ENCODE measurements at regions of chr20 and their contacts with region 1.

Region 1: GRCh38 chr20:54680872-54681619 is 205.7 kb downstream of the DOK5 start:
- DNase-seq: no peak
- ATAC-seq: peak; percentile 27; the same call in 1 of the 3 replicates
- H3K4me3 ChIP-seq: no peak overlapping the region
- H3K27ac ChIP-seq: no peak overlapping the region
- H3K4me1 ChIP-seq: no peaks in the 10 kb centered on the region
- H3K27me3 ChIP-seq: 0 out of 4 replicates have a peak, but pooled peaks cover 0 to 2% of the 10 kb centered on the region in 2 experiments
- CTCF ChIP-seq: peak; percentile 44 to 56 (median 49)
- EP300 ChIP-seq: no peak
- POLR2A ChIP-seq: no peak
- RAD21 ChIP-seq: peak; percentile 65

Region 2: GRCh38 chr20:54585227-54585626 is 95.8 kb before region 1 on chr20:
- CTCF ChIA-PET with region 1: no interaction called
- POLR2A ChIA-PET with region 1: no interaction called
- RAD21 ChIA-PET with region 1: no interaction called
- SMC1A ChIA-PET with region 1: no interaction called
- in situ Hi-C with region 1: no loop called
- intact Hi-C with region 1: no loop called
- DNase-seq: no peak
- ATAC-seq: no peak
- H3K4me3 ChIP-seq: no peak overlapping the region
- H3K27ac ChIP-seq: no peak overlapping the region
- H3K4me1 ChIP-seq: no peaks in the 10 kb centered on the region
- H3K27me3 ChIP-seq: no peaks in the 10 kb centered on the region
- CTCF ChIP-seq: no peak
- EP300 ChIP-seq: no peak
- POLR2A ChIP-seq: no peak
- RAD21 ChIP-seq: no peak

Region 3: DNA sequence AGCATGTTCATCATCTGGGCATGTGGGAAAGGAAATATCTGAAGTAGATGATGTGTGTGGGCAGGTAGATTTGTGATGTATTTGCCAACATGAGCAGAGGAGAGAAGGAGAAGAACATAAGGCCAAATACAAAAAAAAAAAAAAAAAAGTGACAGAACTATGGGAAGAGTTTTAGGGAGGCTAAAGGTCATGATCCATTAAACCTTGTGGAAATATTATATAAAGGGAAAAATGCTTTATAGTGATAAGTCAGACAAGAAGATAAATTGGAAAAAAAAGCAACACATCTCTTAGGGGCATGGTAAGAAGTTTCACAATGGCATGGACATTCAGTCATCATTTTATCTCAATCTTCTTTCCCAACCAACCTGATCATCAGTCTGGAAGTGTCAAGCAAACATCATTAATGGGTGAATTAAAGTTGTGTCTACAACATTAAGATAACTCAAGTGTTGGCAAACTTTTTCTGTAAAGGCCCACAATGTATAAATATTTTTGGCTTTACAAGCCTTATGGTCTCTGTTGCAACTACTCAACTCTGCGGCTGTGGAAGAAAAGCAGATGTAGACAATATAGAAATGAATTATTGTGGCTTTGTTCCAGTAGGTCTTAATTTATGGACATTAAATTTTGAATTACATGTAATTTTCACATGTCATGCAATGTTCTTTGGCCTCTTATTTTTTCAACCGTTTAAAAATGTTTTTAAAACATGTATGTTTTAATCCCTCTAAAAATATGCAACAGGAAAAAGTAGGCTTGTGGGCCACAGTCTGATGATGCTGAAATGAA is 26.2 kb after region 1 on chr20:
- CTCF ChIA-PET with region 1: no interaction called
- POLR2A ChIA-PET with region 1: no interaction called
- RAD21 ChIA-PET with region 1: no interaction called
- SMC1A ChIA-PET with region 1: no interaction called
- in situ Hi-C with region 1: no loop called
- intact Hi-C with region 1: no loop called
- DNase-seq: no peak
- ATAC-seq: no peak
- H3K4me3 ChIP-seq: no peak overlapping the region
- H3K27ac ChIP-seq: no peak overlapping the region
- H3K4me1 ChIP-seq: no peaks in the 10 kb centered on the region
- H3K27me3 ChIP-seq: no peaks in the 10 kb centered on the region
- CTCF ChIP-seq: no peak
- EP300 ChIP-seq: no peak
- POLR2A ChIP-seq: no peak
- RAD21 ChIP-seq: no peak

Region 4: GRCh38 chr20:54726768-54727422 is 45.8 kb after region 1 on chr20:
- CTCF ChIA-PET with region 1: interaction called, 6 read pairs
- POLR2A ChIA-PET with region 1: no interaction called
- RAD21 ChIA-PET with region 1: interaction called, 3 read pairs
- SMC1A ChIA-PET with region 1: interaction called, 4 read pairs
- in situ Hi-C with region 1: no loop called
- intact Hi-C with region 1: loop called (anchors 5 kb)
- DNase-seq: no peak
- ATAC-seq: no peak
- H3K4me3 ChIP-seq: no peak overlapping the region
- H3K27ac ChIP-seq: no peak overlapping the region
- H3K4me1 ChIP-seq: no peaks in the 10 kb centered on the region
- H3K27me3 ChIP-seq: no peaks in the 10 kb centered on the region
- CTCF ChIP-seq: peak in 1 of 3 experiments; percentile 25; a peak in 1 of 6 replicates
- EP300 ChIP-seq: no peak
- POLR2A ChIP-seq: no peak
- RAD21 ChIP-seq: peak; percentile 23; the same call in 1 of the 2 replicates

Region 5: GRCh38 chr20:56343861-56344381 is 1662.9 kb after region 1 on chr20:
- CTCF ChIA-PET with region 1: interaction called, 12 read pairs
- POLR2A ChIA-PET with region 1: no interaction called
- RAD21 ChIA-PET with region 1: interaction called, 7 read pairs
- SMC1A ChIA-PET with region 1: interaction called, 3 read pairs
- in situ Hi-C with region 1: no loop called
- intact Hi-C with region 1: loop called (anchors 5 kb)
- DNase-seq: no peak
- ATAC-seq: peak; percentile 84
- H3K4me3 ChIP-seq: no peak overlapping the region
- H3K27ac ChIP-seq: no peak overlapping the region
- H3K4me1 ChIP-seq: no peaks in the 10 kb centered on the region
- H3K27me3 ChIP-seq: peaks cover 0 to 10% of the 10 kb centered on the region in 2 experiments; a peak in 2 of 4 replicates
- CTCF ChIP-seq: peak; percentile 60 to 75 (median 73)
- EP300 ChIP-seq: no peak
- POLR2A ChIP-seq: no peak
- RAD21 ChIP-seq: peak; percentile 64

Measured in GM12878 (cell line).